Cardiac septum (tissue), 1 donor: ENCODE measurements at regions of chr11 and their contacts with region 1.

Region 1: DNA sequence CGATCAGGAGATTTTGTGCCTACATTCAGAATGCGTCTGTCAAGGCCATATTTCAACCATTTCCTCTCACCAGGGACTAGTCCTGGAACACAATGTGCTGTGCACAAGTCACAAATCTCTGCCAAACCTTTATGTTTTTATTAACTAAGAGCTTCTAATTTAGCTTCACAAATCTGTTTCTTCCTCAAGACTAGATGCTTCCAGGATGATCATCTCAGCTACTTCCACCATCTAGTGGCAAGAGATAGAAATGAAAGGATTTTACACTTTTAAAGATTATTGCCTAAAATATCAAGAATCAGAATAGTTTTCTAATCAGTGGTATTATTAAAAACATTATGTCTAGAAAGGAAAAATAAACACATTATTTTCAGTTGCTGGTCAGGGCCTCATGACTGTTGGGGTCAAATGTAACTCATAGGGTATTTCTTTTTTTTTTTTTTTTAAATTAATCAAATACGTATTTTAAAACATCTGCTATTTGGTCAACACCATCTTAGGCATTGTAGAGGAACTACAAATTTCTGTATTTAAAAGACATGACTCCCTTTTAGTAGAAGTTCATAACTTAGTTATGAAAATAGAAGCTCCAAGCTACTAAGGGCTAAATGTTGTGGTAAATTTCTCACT is 1102.6 kb downstream of the DLG2 start:
- DNase-seq: no peak

Region 2: GRCh38 chr11:83827940-83828554 is 696.5 kb before region 1 on chr11:
- intact Hi-C with region 1: loop called (anchors 5 kb)
- DNase-seq: no peak

Region 3: DNA sequence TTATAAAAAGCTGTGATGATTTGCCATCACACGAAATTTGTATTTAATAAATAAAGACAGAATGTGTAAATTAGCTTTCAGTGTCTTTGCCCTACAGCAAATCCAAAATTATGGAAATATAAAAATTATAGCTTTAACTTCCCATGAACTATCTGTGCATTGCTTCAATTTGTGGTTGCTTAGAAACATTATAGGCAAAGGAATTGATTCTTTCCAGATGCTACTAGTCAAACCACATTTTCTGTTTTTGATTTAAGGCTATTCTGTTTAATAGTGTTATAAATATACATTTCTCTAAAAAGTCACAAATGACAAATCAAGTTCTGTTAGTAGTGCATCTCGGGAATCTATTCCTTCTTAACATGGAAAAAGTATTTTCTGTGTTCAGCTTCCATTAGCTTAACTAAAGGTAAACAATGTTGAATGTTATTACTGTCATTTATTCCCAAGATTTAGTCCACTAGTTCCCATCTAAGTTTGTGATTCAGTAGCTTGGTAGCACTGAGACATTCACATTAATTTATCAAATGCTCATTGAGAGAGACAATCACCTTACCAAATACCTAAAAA is 152.1 kb before region 1 on chr11:
- intact Hi-C with region 1: no loop called
- DNase-seq: no peak

Region 4: DNA sequence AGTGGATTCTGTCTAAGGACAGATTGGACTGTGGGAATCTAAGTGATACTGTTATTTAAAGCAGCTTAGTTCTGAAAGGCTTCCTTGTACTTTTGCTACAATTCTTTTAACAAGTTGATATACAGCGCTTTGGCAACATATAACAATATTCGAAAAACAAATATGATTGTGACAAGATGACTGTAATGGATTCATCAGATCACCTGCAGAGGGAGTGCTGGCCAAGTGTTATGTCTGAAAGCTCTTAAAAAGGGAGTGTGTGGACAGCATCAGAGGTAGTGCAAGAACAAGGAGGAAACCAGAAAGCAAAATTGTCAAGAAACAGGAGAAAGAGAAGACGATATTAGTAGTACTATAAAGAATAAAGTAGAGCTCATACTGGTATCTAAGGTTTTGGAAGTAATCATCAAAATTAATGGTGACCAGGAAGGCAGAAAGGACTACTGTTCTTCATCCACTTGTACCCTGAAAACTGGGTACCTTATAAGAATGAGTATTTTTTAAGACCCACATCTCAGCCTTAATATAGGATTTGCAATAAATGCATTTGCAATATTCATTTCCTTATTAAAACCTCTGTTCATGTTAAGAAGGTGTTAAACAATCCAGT is 126.4 kb before region 1 on chr11:
- intact Hi-C with region 1: loop called (anchors 10 kb)
- DNase-seq: no peak

Region 5: GRCh38 chr11:84594602-84595001 is 70.1 kb after region 1 on chr11:
- intact Hi-C with region 1: no loop called
- DNase-seq: no peak